ENCODE measurements at regions of chr2 and their contacts with region 1.

Region 1: GRCh38 chr2:20446917-20447436 is at the start of gene RHOB:
- DNase-seq: peak; percentile 97
- H3K4me3 Mint-ChIP-seq: peak within 1 kb of the TSS; percentile 71
- H3K27ac Mint-ChIP-seq: no peak within 1 kb of the TSS
- H3K4me1 Mint-ChIP-seq: no peaks in the 10 kb centered on the region
- H3K27me3 Mint-ChIP-seq: no peaks in the 10 kb centered on the region
- CTCF ChIP-seq: no peak
- total RNA-seq, gene RHOB: 28.1 and 45.7 TPM in 2 replicates

Region 2: GRCh38 chr2:19086231-19086651 is 1360.7 kb before region 1 on chr2:
- CTCF ChIA-PET with region 1: no interaction called
- POLR2A ChIA-PET with region 1: no interaction called
- intact Hi-C with region 1: no loop called
- DNase-seq: no peak
- H3K4me3 Mint-ChIP-seq: no peak overlapping the region
- H3K27ac Mint-ChIP-seq: peak overlapping the region; percentile 22
- H3K4me1 Mint-ChIP-seq: no peaks in the 10 kb centered on the region
- H3K27me3 Mint-ChIP-seq: no peaks in the 10 kb centered on the region
- CTCF ChIP-seq: no peak

Region 3: DNA sequence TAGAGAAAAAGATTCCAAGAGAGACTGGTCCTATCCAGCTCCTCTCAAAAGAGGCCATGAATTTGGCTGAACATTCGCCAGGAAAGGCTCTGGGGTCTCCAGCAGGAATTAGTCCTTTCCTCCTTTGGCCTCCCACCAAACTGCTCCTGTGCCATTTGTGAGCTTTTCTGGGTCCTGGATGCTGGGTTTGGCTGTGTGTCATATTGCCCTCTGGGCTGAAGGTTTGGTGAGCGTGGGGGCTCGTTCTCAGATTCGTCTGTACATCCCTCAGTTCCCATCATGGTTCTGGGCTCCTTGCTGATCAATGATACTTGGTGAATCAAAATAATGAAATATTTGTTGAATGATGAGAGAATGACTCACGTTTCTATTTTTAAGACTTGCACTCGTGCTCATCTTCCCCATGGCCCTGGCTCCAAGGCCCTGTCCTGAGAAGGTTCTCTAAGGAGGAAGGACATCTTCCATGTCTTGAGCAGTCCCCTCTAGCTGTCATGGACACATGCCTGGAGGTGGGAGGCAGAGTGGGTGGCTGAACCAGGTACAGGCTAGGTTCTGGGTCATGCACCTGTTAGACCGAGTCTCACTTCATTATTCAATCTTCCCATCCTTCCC is 47.9 kb before region 1 on chr2:
- CTCF ChIA-PET with region 1: interaction called, 74 read pairs
- POLR2A ChIA-PET with region 1: interaction called, 3 read pairs
- intact Hi-C with region 1: loop called (anchors 1 kb)
- DNase-seq: no peak
- H3K4me3 Mint-ChIP-seq: no peak overlapping the region
- H3K27ac Mint-ChIP-seq: no peak overlapping the region
- H3K4me1 Mint-ChIP-seq: peaks cover 25% of the 10 kb centered on the region
- H3K27me3 Mint-ChIP-seq: no peaks in the 10 kb centered on the region
- CTCF ChIP-seq: no peak

Region 4: GRCh38 chr2:20424300-20425290 is 22.4 kb before region 1 on chr2:
- CTCF ChIA-PET with region 1: interaction called, 12 read pairs
- POLR2A ChIA-PET with region 1: interaction called, 5 read pairs
- intact Hi-C with region 1: no loop called
- DNase-seq: peak; percentile 61
- H3K4me3 Mint-ChIP-seq: no peak overlapping the region
- H3K27ac Mint-ChIP-seq: peak overlapping the region; percentile 67
- H3K4me1 Mint-ChIP-seq: peaks cover 47% of the 10 kb centered on the region
- H3K27me3 Mint-ChIP-seq: no peaks in the 10 kb centered on the region
- CTCF ChIP-seq: no peak

Region 5: GRCh38 chr2:20617892-20618467 is 171.0 kb after region 1 on chr2:
- CTCF ChIA-PET with region 1: interaction called, 16 read pairs
- POLR2A ChIA-PET with region 1: interaction called, 5 read pairs
- intact Hi-C with region 1: loop called (anchors 1 kb)
- DNase-seq: peak; percentile 99
- H3K4me3 Mint-ChIP-seq: peak overlapping the region; percentile 31
- H3K27ac Mint-ChIP-seq: peak overlapping the region; percentile 78
- H3K4me1 Mint-ChIP-seq: peaks cover 33% of the 10 kb centered on the region
- H3K27me3 Mint-ChIP-seq: no peaks in the 10 kb centered on the region
- CTCF ChIP-seq: peak; percentile 18

Region 6: DNA sequence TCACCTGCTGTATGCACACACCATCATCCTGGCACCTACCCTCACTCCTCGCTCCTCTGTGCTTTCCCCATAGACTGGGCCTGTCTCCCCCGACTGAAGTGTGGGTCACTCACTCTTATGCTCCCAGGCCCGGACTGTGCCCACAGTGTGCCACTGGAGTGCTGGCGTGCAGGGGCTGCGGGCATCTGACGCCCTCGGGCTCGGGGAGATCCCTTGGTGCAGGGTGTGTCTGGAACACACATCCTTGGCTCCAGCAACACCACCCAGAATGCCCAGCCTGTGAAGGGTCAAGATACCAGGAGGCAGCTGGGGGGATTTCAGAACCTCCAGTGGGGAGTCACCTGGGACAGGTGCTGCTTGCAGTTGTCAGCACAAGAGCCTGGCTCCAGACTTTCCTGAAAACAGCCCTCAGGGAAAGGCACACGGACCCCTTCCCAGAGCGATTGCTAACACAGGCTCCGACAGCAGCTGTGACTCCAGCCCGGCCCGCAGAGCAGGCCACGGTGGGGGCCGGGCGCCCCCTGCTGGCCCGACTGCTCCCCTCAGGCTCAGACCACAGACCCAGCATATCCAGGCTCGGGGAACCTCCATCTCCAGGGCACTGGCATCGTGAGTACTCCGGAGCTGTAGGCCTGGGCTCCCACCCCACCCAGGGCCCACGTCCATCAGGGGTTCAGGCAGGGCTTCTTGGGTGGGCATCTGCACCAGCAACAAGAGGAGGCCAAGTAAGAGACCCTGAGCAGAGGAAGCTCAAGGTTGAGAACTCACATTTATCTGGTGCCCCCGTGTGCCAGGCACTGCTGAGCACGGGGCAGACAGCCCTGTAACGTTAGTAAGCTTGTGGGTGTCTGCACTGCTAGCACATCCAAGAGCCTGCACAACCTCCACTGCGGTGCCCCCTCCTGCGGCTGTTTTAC is 195.3 kb after region 1 on chr2:
- CTCF ChIA-PET with region 1: interaction called, 98 read pairs
- POLR2A ChIA-PET with region 1: interaction called, 20 read pairs
- intact Hi-C with region 1: no loop called
- DNase-seq: peak; percentile 70
- H3K4me3 Mint-ChIP-seq: no peak overlapping the region
- H3K27ac Mint-ChIP-seq: no peak overlapping the region
- H3K4me1 Mint-ChIP-seq: peaks cover 17% of the 10 kb centered on the region
- H3K27me3 Mint-ChIP-seq: no peaks in the 10 kb centered on the region
- CTCF ChIP-seq: peak; percentile 91

Region 7: GRCh38 chr2:20962939-20963557 is 516.1 kb after region 1 on chr2:
- CTCF ChIA-PET with region 1: no interaction called
- POLR2A ChIA-PET with region 1: no interaction called
- intact Hi-C with region 1: loop called (anchors 10 kb)
- DNase-seq: peak; percentile 73
- H3K4me3 Mint-ChIP-seq: no peak overlapping the region
- H3K27ac Mint-ChIP-seq: no peak overlapping the region
- H3K4me1 Mint-ChIP-seq: no peaks in the 10 kb centered on the region
- H3K27me3 Mint-ChIP-seq: peaks cover 46% of the 10 kb centered on the region
- CTCF ChIP-seq: peak; percentile 79

Measured in MCF 10A (cell line).